Tibial artery (tissue), 4 donors: ENCODE measurements at regions of chr14 and their contacts with region 1.

Region 1: GRCh38 chr14:104639889-104640548 is 35.4 kb upstream of the TMEM179 start:
- DNase-seq: peak in 1 of 2 donors; percentile 44
- H3K4me3 ChIP-seq: no peak overlapping the region
- H3K27ac ChIP-seq: no peak overlapping the region
- H3K4me1 ChIP-seq: peaks cover 0 to 5% (median 2%) of the 10 kb centered on the region in 4 donors
- H3K27me3 ChIP-seq: peaks cover 0 to 72% of the 10 kb centered on the region in 2 donors
- CTCF ChIP-seq: peak; percentile 78 to 92

Region 2: DNA sequence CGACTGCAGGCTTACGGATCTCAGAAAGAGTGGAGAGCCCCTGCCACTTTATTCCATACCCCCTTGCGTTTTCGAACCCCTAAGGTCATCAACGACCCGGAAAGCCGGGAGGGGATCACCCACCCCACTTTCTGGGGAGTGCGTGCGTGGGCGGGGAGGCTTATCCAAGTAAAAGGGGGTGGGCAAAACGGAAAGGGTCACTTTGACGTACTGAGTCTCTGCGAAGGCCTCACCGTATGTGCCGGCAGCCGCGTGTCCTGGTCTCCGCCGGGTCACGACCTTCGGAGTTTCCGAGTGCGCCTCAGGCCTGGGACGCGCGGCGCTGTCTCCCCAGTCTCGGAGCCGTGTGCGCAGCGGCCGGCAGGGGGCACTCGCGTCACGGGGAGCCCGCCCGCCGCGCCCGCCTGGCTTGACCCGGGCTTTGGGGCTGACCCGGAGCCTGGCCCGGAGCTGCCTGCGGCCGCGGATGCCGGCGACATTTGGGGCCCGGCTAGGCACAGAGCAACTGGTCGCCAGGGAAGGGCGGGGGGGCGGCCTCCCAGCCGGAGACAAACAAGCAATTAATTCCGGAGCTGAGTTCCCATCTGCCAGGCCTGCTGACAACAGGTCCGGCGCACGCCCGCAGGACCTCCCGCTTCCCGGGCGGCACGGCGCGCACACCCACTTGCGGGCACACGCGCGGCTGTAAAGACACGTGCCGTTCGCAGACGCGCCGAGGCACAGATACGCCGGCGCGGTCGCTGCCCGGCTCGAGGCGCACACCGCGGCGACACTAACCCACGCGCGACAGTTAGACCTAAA is 502.5 kb before region 1 on chr14:
- intact Hi-C with region 1: loop called (anchors 5 kb)
- DNase-seq: peak; percentile 46 to 67
- H3K4me3 ChIP-seq: peak overlapping the region; percentile 39 to 51
- H3K27ac ChIP-seq: no peak overlapping the region
- H3K4me1 ChIP-seq: peaks cover 0 to 45% (median 34%) of the 10 kb centered on the region in 4 donors
- H3K27me3 ChIP-seq: peaks cover 0 to 92% of the 10 kb centered on the region in 2 donors
- CTCF ChIP-seq: peak; percentile 72 to 74

Region 3: DNA sequence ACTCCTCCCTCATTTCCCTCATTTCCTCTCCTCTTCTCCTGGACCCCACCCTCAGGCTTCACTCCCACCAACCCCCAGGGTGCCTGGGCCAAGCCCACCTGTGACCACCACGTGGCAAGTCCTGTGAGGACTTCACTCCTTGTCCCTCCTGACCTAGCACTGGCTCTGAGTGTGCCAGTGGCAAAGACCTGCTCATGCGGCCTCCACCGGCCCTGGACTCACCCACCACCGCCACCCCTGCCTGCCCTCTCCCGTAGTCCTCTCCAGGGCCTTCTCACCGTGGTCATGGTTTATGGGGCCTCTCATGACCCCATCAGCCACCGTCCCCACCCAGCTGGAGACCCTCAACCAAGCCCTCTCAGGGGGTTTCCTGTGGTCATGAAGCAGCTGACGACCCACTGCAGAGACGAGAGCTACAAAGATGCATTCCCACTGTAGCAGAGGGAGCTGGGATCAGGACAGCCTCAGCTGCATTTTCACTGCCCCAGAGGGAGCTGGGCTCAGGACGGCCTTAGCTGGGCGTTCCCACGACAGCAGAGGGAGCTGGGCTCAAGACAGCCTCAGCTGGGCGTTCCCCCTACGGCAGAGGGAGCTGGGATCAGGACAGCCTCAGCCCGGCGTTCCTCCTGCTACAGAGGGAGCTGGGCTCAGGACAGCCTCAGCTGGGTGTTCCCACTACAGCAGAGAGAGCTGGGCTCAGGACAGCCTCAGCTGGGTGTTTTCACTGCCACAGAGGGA is 63.6 kb before region 1 on chr14:
- intact Hi-C with region 1: no loop called
- DNase-seq: no peak
- H3K4me3 ChIP-seq: no peak overlapping the region
- H3K27ac ChIP-seq: no peak overlapping the region
- H3K4me1 ChIP-seq: peaks cover 0 to 34% (median 28%) of the 10 kb centered on the region in 4 donors
- H3K27me3 ChIP-seq: peaks cover 0 to 59% of the 10 kb centered on the region in 2 donors
- CTCF ChIP-seq: no peak